MCF 10A (cell line): ENCODE measurements at regions of chr3 and their contacts with region 1.

Region 1: DNA sequence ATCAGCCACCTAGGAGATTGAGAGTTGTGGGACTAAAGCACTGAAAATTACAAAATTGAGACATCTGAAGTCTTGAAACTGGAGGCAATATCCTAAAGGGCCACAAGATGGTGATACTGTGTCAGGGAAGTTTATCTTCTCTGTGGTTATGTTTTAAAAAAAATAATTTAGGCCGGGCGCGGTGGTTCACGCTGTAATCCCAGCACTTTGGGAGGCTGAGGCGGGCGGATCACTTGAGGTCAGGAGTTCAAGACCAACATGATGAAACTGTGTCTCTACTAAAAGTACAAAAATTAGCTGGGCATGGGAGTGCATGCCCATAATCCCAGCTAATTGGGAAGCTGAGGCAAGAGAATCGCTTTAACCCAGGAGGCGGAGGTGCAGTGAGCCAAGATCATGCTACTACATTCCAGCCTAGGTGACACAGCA is 17.9 kb upstream of the NIT2 start:
- DNase-seq: peak; percentile 74
- H3K4me3 Mint-ChIP-seq: no peak overlapping the region
- H3K27ac Mint-ChIP-seq: no peak overlapping the region
- H3K4me1 Mint-ChIP-seq: no peaks in the 10 kb centered on the region
- H3K27me3 Mint-ChIP-seq: no peaks in the 10 kb centered on the region
- CTCF ChIP-seq: peak; percentile 72

Region 2: DNA sequence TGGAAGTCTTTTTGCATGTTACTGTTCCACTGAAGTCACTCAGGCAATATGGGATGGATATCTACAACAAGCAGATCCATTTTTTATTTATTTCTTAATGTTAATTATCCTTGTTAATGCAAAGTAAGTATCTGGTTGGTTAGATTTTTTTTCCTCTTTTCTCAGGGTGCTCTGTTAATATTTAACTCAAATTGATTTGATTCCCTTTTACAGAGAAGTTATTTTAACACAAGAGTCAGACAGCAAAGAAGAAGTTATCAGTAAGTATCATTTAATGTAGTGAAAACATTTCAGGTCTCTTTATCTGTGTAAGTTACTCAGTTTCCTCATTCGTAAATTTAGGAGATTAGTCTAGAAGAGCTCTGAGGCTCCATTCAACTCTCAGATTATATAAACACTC is 21.6 kb before region 1 on chr3:
- CTCF ChIA-PET with region 1: interaction called, 10 read pairs
- POLR2A ChIA-PET with region 1: interaction called, 3 read pairs
- intact Hi-C with region 1: no loop called
- DNase-seq: no peak
- H3K4me3 Mint-ChIP-seq: no peak overlapping the region
- H3K27ac Mint-ChIP-seq: no peak overlapping the region
- H3K4me1 Mint-ChIP-seq: no peaks in the 10 kb centered on the region
- H3K27me3 Mint-ChIP-seq: no peaks in the 10 kb centered on the region
- CTCF ChIP-seq: no peak

Region 3: DNA sequence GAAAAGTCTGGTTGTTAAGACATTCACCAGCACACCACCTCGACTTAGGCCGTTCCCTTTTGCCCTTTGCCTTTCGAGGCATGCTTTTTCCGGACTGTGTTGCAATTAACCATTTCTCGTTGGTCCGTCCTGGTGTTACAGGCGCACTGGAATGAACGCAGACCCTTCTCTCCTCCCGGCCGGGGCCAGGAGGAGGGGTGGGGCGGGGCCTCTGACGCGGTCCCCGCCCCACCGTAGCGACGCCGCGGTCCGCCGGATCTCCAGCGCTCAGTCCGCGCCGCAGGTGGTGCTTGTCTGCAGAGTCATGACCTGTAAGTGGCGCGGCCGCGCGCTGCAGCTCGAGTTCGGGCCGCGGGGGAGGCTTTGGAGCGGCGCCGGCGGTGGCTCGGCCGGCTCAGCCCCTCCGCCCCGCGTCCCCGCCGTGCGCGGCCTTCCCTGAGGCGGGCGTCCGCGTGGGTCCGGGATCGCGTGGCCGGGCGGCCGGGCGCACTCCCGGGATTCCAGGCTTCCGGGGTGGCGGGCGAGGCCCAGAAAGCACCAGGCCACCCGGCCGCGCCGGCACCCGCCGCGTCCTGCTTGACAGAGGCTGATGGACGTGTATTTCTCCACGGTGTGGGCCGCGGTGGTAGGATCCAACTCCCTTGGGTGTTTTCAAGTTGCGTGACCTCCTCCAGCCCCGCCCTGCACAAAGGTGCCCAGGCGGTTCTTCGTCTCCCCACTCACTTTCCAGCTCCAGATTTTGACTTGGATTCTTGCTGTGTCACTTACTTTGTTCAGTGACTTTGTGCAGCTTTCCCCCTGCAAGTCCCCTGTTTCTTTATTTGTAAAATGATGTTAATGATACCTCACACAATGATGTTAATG is 18.1 kb after region 1 on chr3 and contains the start of gene NIT2:
- CTCF ChIA-PET with region 1: interaction called, 9 read pairs
- POLR2A ChIA-PET with region 1: interaction called, 18 read pairs
- intact Hi-C with region 1: no loop called
- DNase-seq: peak; percentile 82
- H3K4me3 Mint-ChIP-seq: peak within 1 kb of the TSS; percentile 85
- H3K27ac Mint-ChIP-seq: peak within 1 kb of the TSS; percentile 82
- H3K4me1 Mint-ChIP-seq: peaks cover 5% of the 10 kb centered on the region
- H3K27me3 Mint-ChIP-seq: no peaks in the 10 kb centered on the region
- CTCF ChIP-seq: no peak
- total RNA-seq, gene NIT2: 37.0 and 42.6 TPM in 2 replicates

Region 4: DNA sequence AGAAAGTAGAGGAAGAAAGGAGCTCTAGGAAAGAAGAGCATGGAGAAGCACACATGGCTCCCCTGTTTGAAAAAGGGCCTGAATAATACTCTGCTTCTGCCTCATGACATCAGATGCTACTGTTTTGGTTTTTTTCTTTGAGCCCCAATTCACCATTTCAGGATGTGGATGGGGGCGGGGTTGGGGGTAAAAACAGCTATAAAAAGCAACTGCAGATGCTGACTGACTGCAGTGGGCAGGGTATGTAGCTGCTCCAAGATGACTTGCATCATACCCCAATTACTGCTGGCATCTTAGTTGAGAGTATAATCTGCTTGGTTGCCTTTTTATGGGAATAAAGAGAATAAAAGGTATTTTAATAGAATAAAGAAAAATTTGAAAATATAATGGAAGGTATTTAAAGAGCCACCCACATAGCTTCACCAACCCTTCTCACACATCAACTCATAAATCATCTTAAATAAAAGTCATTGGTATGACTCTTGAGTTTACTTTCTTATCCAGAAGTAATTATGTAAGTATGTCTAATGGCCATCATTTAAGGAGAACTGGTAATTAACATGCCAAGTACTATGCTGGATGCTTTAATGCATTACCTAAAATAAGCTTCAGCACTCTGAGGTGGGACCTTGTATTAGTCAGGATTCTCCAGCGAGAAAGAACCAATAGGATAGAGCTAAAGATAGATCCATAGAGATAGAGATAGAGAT is 139.3 kb after region 1 on chr3:
- CTCF ChIA-PET with region 1: no interaction called
- POLR2A ChIA-PET with region 1: no interaction called
- intact Hi-C with region 1: no loop called
- DNase-seq: no peak
- H3K4me3 Mint-ChIP-seq: no peak overlapping the region
- H3K27ac Mint-ChIP-seq: no peak overlapping the region
- H3K4me1 Mint-ChIP-seq: no peaks in the 10 kb centered on the region
- H3K27me3 Mint-ChIP-seq: no peaks in the 10 kb centered on the region
- CTCF ChIP-seq: no peak

Region 5: GRCh38 chr3:100590114-100590839 is 273.6 kb after region 1 on chr3:
- CTCF ChIA-PET with region 1: interaction called, 4 read pairs
- POLR2A ChIA-PET with region 1: no interaction called
- intact Hi-C with region 1: loop called (anchors 1 kb)
- DNase-seq: peak; percentile 83
- H3K4me3 Mint-ChIP-seq: no peak overlapping the region
- H3K27ac Mint-ChIP-seq: no peak overlapping the region
- H3K4me1 Mint-ChIP-seq: peaks cover 8% of the 10 kb centered on the region
- H3K27me3 Mint-ChIP-seq: no peaks in the 10 kb centered on the region
- CTCF ChIP-seq: peak; percentile 75